ENCODE measurements at regions of chr2 and their contacts with region 1.

Region 1: DNA sequence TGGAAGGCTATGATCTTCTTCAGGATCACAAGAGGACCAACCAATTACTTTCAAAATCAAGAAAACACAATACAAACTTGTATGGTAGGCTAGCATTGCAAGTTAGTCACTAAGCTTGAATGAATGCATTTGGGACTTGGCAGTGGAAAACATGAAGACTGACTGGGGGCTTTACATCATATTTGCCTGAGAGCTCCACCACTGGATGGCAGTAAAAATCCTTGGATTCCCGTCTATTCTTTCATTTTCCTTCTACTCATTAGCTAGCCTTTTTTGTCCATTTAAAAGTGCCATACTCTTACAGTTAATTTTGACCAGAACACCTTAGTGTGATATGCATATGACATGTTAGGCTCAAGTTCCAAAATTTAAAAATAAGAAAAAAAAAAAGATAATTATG is 63.5 kb upstream of the RASGRP3 start:
- DNase-seq: peak in 1 of 2 experiments; percentile 46
- H3K4me3 ChIP-seq: no peak overlapping the region
- H3K4me3 Mint-ChIP-seq: no peak overlapping the region
- H3K27ac Mint-ChIP-seq: no peak overlapping the region
- H3K4me1 ChIP-seq: no peaks in the 10 kb centered on the region
- H3K4me1 Mint-ChIP-seq: no peaks in the 10 kb centered on the region
- H3K27me3 ChIP-seq: no peaks in the 10 kb centered on the region
- H3K27me3 Mint-ChIP-seq: peaks cover 3% of the 10 kb centered on the region
- CTCF ChIP-seq: peak; percentile 30 to 50

Region 2: DNA sequence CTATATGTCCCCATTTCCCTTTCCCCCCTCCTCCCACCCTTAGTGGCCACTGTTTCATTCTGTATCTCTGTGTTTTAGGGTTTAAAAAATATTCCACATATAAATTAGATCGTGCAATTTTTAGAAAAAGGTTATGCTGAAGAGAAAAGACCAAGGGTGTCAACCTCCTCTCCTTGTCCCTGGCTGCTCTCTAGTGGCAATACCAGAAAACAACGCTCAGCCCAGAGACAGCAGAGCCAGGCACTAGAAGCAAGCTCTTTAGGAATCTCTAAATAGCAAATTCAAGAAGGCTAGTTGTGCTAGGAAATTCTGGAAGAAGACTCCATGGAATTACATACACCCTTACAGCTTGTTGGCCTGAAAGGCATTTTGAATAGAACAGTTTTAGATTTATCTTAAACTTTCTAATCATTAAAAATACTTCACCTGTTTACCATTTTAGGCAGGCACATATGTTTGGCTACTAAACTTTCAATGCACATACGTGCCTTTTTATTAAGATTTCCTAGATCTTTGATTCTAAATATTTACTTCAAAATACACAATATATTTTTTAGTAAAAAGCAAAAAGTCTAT is 28.4 kb after region 1 on chr2:
- CTCF ChIA-PET with region 1: interaction called, 15 read pairs
- POLR2A ChIA-PET with region 1: no interaction called
- intact Hi-C with region 1: loop called (anchors 1 kb)
- DNase-seq: peak; percentile 55 to 64
- H3K4me3 ChIP-seq: no peak overlapping the region
- H3K4me3 Mint-ChIP-seq: no peak overlapping the region
- H3K27ac Mint-ChIP-seq: no peak overlapping the region
- H3K4me1 ChIP-seq: no peaks in the 10 kb centered on the region
- H3K4me1 Mint-ChIP-seq: no peaks in the 10 kb centered on the region
- H3K27me3 ChIP-seq: no peaks in the 10 kb centered on the region
- H3K27me3 Mint-ChIP-seq: peaks cover under 1% of the 10 kb centered on the region
- CTCF ChIP-seq: peak; percentile 55 to 74

Region 3: DNA sequence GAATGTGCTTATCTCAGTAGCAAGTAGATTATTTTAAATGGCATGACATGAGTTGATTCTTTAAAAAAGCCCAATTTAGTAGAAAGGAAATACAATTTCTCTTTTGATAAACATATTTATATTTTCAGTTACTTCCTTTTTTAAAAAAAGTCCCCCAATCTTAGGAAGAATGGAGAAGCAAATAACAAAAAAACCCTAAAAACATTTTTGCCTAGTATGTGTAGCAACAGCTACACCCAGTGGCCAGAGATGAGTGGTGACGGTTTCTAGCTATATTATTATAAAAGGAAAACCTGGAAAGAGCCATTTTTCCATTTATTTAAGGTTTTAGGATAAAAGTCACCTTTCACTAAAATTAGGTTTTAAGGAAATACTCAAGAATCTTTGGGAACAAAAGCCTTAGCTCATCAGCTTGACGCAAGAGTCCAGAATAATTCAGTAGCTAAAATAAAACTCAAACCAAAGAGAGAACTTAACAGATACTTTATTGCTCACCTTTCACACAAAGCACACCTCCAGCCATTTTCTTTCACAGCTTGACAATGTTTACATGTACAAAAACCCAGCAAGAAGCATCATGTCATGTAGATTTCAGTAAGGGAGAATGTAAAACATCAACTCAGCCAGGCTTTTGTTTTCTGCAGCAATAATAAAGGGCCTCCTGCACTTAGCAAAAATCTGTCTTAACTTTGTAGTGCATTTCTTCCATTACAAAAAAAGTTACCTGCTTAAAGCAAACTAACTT is 170.4 kb after region 1 on chr2:
- CTCF ChIA-PET with region 1: interaction called, 42 read pairs
- POLR2A ChIA-PET with region 1: no interaction called
- intact Hi-C with region 1: loop called (anchors 1 kb)
- DNase-seq: peak in 1 of 2 experiments; percentile 44
- H3K4me3 ChIP-seq: no peak overlapping the region
- H3K4me3 Mint-ChIP-seq: no peak overlapping the region
- H3K27ac Mint-ChIP-seq: no peak overlapping the region
- H3K4me1 ChIP-seq: no peaks in the 10 kb centered on the region
- H3K4me1 Mint-ChIP-seq: no peaks in the 10 kb centered on the region
- H3K27me3 ChIP-seq: no peaks in the 10 kb centered on the region
- H3K27me3 Mint-ChIP-seq: no peaks in the 10 kb centered on the region
- CTCF ChIP-seq: peak; percentile 83 to 85

Region 4: GRCh38 chr2:33666628-33667254 is 253.8 kb after region 1 on chr2:
- CTCF ChIA-PET with region 1: interaction called, 3 read pairs
- POLR2A ChIA-PET with region 1: no interaction called
- intact Hi-C with region 1: loop called (anchors 10 kb)
- DNase-seq: no peak
- H3K4me3 ChIP-seq: no peak overlapping the region
- H3K4me3 Mint-ChIP-seq: no peak overlapping the region
- H3K27ac Mint-ChIP-seq: no peak overlapping the region
- H3K4me1 ChIP-seq: no peaks in the 10 kb centered on the region
- H3K4me1 Mint-ChIP-seq: no peaks in the 10 kb centered on the region
- H3K27me3 ChIP-seq: no peaks in the 10 kb centered on the region
- H3K27me3 Mint-ChIP-seq: peaks cover 4% of the 10 kb centered on the region
- CTCF ChIP-seq: no peak